Naive thymus-derived CD4-positive, alpha-beta T cell (primary cell): ENCODE measurements at regions of chr10 and their contacts with region 1.

Region 1: GRCh38 chr10:63227207-63227915 is 94.2 kb downstream of the NRBF2 start:
- DNase-seq: peak in 6 of 9 donors; percentile 35 to 63 (median 56)
- ATAC-seq: peak; percentile 43
- H3K4me3 ChIP-seq: no peak overlapping the region
- H3K4me3 Mint-ChIP-seq: peak overlapping the region; percentile 8 to 69 (median 53)
- H3K27ac ChIP-seq: peak overlapping the region; percentile 80
- H3K27ac Mint-ChIP-seq: peak overlapping the region; percentile 28 to 97 (median 94)
- H3K4me1 ChIP-seq: peaks cover 23 to 42% of the 10 kb centered on the region in 2 donors
- H3K4me1 Mint-ChIP-seq: peaks cover 26 to 86% (median 75%) of the 10 kb centered on the region in 7 donors
- H3K27me3 ChIP-seq: no peaks in the 10 kb centered on the region
- H3K27me3 Mint-ChIP-seq: no peaks in the 10 kb centered on the region

Region 2: GRCh38 chr10:63241841-63242281 is 14.5 kb after region 1 on chr10:
- CTCF ChIA-PET with region 1: no interaction called
- POLR2A ChIA-PET with region 1: interaction called, 3 read pairs
- intact Hi-C with region 1: loop called (anchors 1 to 2 kb)
- DNase-seq: peak in 5 of 9 donors; percentile 27 to 41 (median 30)
- ATAC-seq: peak; percentile 45
- H3K4me3 ChIP-seq: peak overlapping the region; percentile 20
- H3K4me3 Mint-ChIP-seq: peak overlapping the region; percentile 25 to 84 (median 77)
- H3K27ac ChIP-seq: peak overlapping the region; percentile 46
- H3K27ac Mint-ChIP-seq: peak overlapping the region; percentile 68 to 89 (median 81)
- H3K4me1 ChIP-seq: peaks cover 43 to 44% of the 10 kb centered on the region in 2 donors
- H3K4me1 Mint-ChIP-seq: peaks cover 54 to 95% (median 79%) of the 10 kb centered on the region in 7 donors
- H3K27me3 ChIP-seq: no peaks in the 10 kb centered on the region
- H3K27me3 Mint-ChIP-seq: no peaks in the 10 kb centered on the region